ENCODE measurements at regions of chr6 and their contacts with region 1.

Region 1: GRCh38 chr6:132365281-132365907 is 35.9 kb downstream of the MOXD1 start:
- DNase-seq: peak; percentile 57
- H3K4me3 Mint-ChIP-seq: no peak overlapping the region
- H3K27ac Mint-ChIP-seq: peak overlapping the region; percentile 70
- H3K4me1 Mint-ChIP-seq: peaks cover 16% of the 10 kb centered on the region
- H3K27me3 Mint-ChIP-seq: peaks cover 44% of the 10 kb centered on the region

Region 2: DNA sequence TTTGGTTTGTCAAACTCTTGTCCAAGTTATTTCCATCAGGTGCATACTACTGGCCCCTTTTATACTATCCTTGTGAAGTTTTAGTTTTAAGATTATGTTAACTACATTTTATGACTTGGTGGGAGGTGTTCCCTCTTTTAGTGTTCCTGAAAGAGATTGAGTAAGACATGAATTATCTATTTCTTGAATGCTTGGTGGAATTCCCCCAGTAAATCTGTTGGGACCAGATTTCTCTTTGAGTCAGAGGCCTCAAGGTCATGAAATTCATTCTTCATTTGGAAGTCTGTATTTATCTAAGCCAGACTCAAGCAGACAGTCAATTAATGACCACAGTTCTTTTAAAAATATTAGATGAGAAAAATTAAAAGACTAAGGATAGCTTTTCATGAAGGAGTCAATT is 45.4 kb before region 1 on chr6:
- intact Hi-C with region 1: loop called (anchors 5 kb)
- DNase-seq: no peak
- H3K4me3 Mint-ChIP-seq: no peak overlapping the region
- H3K27ac Mint-ChIP-seq: no peak overlapping the region
- H3K4me1 Mint-ChIP-seq: peaks cover 4% of the 10 kb centered on the region
- H3K27me3 Mint-ChIP-seq: peaks cover 7% of the 10 kb centered on the region

Region 3: DNA sequence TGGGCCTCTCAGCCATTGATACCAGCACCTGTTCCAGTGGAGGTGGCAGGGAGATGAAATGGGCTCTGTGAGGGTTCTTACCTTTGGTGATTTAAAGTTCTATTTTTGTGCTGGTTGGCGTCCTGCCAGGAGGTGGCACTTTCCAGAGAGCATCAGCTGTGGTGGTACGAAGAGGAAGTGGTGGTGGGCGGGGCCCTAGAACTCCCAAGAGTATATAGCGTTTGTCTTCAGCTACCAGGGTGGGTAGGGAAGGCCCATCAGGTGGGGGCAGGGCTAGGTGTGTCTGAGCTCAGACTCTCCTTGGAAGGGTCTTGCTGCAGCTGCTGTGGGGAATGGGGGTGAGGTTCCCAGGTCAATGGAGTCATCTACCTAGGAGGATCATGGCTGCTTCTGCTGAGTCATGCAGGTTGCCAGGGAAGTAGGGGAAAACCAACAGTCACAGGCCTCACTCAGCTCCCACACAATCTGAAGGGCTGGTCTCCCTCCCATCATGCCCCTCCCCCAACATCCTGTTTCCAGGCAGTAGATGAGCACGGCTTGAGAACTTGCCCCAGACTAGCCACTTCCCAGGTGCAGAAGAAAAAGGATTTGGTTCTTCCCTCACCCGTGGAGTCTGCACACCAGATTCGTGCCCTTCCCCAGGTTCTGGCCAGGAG is 10.8 kb before region 1 on chr6:
- intact Hi-C with region 1: loop called (anchors 1 kb)
- DNase-seq: peak; percentile 73
- H3K4me3 Mint-ChIP-seq: peak overlapping the region; percentile 22
- H3K27ac Mint-ChIP-seq: peak overlapping the region; percentile 74
- H3K4me1 Mint-ChIP-seq: peaks cover 35% of the 10 kb centered on the region
- H3K27me3 Mint-ChIP-seq: peaks cover 6% of the 10 kb centered on the region

Region 4: GRCh38 chr6:132401120-132401945 is 35.9 kb after region 1 on chr6 and contains the start of gene MOXD1:
- intact Hi-C with region 1: loop called (anchors 5 kb)
- DNase-seq: no peak
- H3K4me3 Mint-ChIP-seq: peak within 1 kb of the TSS; percentile 48
- H3K27ac Mint-ChIP-seq: no peak within 1 kb of the TSS
- H3K4me1 Mint-ChIP-seq: peaks cover 11% of the 10 kb centered on the region
- H3K27me3 Mint-ChIP-seq: peaks cover 67% of the 10 kb centered on the region
- total RNA-seq, gene MOXD1: 0.12 TPM in 1 of 2 replicates, not detected in the other

Region 5: DNA sequence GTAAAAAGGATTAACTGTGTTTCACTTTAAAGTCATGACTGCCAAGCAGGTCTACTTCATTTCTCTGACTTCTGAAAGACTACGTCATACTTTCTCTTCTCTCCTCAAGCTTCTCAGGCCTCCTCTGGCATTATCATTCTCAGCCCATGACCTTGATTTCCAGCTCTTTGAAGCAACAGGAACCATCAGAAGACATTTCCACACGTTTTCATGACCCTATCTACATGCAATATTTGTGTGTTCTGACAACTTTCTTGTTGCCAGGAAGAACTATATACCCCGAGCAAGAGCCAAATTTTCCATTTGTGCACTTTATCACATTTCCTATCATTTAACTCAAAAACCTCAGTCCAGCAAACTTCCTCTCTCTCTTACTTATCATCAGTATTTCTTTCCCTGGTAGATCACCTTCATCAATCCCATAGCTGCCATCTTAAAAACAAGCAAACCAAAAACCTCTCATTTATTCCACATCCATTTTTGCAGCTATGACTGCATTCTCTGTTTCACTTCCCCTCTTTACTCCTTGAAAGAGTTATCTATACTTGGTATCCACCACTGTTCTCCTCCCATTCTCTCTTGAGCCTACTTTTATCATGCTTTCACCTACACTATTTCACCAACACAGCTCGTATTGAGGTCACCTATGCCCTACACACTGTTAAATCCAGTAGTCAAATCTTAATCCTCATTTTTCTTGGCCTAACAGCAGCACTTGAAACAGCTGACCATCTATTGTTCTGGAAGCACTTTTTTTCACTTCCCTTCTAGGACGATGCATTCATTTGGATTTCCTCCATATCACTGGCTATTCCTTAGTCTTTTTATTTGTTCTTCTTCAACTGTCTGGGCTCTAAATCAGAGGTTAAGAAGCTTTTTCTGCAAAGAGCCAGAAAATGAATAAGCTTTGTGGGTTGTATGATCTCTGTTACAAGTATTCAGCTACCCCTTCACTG is 100.4 kb after region 1 on chr6:
- intact Hi-C with region 1: loop called (anchors 5 kb)
- DNase-seq: no peak
- H3K4me3 Mint-ChIP-seq: no peak overlapping the region
- H3K27ac Mint-ChIP-seq: no peak overlapping the region
- H3K4me1 Mint-ChIP-seq: no peaks in the 10 kb centered on the region
- H3K27me3 Mint-ChIP-seq: no peaks in the 10 kb centered on the region

Region 6: GRCh38 chr6:132483779-132484679 is 118.6 kb after region 1 on chr6:
- intact Hi-C with region 1: no loop called
- DNase-seq: peak; percentile 86
- H3K4me3 Mint-ChIP-seq: no peak overlapping the region
- H3K27ac Mint-ChIP-seq: no peak overlapping the region
- H3K4me1 Mint-ChIP-seq: peaks cover 10% of the 10 kb centered on the region
- H3K27me3 Mint-ChIP-seq: no peaks in the 10 kb centered on the region

Region 7: DNA sequence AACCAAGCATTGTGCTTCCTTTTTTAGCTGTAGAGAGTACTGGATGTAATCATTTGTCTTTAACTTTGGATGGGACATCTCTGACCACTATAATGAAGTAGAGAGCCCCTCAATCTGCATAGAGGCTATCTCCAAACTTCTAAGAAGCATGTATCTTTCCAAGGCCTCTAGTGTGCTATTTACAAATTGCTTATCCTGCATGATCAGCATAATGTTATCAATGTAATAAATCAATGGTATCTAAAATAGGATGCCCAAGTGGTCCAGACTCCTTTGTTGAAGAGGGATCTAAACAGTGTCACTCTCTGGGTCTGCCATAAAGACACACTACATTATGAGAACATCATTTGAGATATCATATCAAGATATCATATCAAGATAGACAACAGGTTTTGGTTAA is 179.4 kb after region 1 on chr6:
- intact Hi-C with region 1: no loop called
- DNase-seq: no peak
- H3K4me3 Mint-ChIP-seq: no peak overlapping the region
- H3K27ac Mint-ChIP-seq: no peak overlapping the region
- H3K4me1 Mint-ChIP-seq: no peaks in the 10 kb centered on the region
- H3K27me3 Mint-ChIP-seq: peaks cover 16% of the 10 kb centered on the region